ENCODE measurements at regions of chr6 and their contacts with region 1.

Region 1: DNA sequence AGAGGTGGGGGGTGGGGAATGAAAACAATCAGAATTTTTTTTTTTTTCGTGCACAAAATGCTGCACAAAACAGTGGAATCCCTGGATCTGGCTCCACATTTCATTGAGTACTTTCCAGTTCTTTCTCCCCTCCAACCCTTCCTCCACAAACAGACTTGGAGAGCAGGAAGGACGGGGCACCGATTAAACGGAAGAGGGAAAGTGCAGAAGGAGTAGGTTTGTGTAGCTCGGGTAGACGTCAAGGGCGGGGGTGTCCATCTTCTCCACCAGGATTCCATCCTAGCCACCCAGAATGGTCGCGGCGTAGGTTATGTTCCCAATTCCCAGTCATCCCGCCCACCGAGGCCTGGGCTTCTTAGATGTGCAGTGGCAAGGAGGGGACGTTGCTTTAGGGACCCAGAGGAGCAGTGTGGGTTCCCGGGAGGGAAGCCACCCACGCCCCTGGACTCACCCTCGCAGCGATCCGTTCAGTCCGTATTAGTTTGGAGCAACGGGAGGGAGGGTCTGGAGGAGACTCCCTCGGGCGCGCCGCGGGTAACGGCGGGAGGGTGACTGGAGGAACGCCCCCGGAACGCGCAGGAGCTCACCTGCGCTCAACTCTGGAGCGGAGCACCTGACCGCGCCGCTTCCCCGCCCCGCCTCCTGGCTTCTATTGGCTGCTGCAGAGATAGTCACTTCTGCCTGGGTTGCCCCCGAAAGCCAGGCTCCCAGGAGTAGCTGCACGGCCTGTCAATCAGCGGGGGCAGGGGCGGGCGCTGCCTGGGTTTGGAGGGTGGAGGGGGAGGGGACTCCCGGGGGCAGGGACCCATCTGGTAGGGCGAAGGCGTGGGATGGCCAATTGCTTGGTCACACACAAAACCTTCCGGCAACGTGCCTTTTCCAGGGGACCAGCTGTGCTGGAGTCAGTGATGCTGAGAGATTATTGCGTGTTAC is at the start of gene ENPP5:
- DNase-seq: peak; percentile 96
- H3K4me3 Mint-ChIP-seq: peak within 1 kb of the TSS; percentile 95
- H3K27ac Mint-ChIP-seq: peak within 1 kb of the TSS; percentile 87
- H3K4me1 Mint-ChIP-seq: no peaks in the 10 kb centered on the region
- H3K27me3 Mint-ChIP-seq: no peaks in the 10 kb centered on the region
- CTCF ChIP-seq: no peak
- total RNA-seq, gene ENPP5: 17.3 and 18.7 TPM in 2 replicates

Region 2: GRCh38 chr6:45922728-45923351 is 247.8 kb before region 1 on chr6:
- CTCF ChIA-PET with region 1: no interaction called
- intact Hi-C with region 1: no loop called
- DNase-seq: peak; percentile 52
- H3K4me3 Mint-ChIP-seq: no peak overlapping the region
- H3K27ac Mint-ChIP-seq: no peak overlapping the region
- H3K4me1 Mint-ChIP-seq: peaks cover 8% of the 10 kb centered on the region
- H3K27me3 Mint-ChIP-seq: no peaks in the 10 kb centered on the region
- CTCF ChIP-seq: peak; percentile 63

Region 3: GRCh38 chr6:46080111-46080510 is 90.5 kb before region 1 on chr6:
- CTCF ChIA-PET with region 1: no interaction called
- intact Hi-C with region 1: no loop called
- DNase-seq: no peak
- H3K4me3 Mint-ChIP-seq: no peak overlapping the region
- H3K27ac Mint-ChIP-seq: no peak overlapping the region
- H3K4me1 Mint-ChIP-seq: no peaks in the 10 kb centered on the region
- H3K27me3 Mint-ChIP-seq: peaks cover 13% of the 10 kb centered on the region
- CTCF ChIP-seq: no peak

Region 4: DNA sequence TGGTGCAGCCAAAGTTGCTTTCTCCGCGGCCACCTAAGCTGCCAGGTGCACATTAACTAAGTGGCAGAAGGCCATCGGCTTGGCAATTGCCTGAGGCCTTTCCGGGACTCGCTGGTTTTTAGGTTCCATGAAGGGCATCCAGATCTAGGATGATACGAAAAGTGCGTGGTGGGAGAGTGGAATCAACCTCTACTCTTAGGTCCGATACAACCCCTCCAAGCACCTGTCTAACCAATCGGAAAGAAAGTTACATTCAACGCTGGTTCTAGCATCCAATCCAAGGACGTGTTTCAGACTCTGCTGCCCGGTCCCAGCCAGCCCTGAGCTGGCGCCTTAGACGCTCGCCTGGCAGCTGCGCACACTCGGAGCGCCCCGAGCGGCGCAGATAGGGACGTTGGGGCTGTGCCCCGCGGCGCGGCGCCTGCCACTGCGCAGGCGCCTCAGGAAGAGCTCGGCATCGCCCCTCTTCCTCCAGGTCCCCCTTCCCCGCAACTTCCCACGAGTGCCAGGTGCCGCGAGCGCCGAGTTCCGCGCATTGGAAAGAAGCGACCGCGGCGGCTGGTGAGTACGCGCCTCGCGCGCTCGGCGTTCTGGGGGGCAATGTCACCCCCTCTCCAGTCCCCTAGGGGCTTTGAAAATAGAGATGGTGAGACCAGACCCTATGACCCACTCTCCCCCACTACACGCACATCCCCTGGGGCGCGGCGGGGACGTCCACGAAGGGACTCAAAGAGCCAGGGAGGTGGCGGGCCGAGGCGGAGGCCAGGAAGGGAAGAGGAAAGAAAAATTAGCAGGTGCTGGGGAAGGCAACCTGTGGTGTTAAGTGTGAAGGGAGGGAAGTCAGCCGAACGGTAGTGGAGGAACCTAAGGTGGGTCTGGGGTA is 40.8 kb before region 1 on chr6 and contains the start of gene ENPP4:
- CTCF ChIA-PET with region 1: interaction called, 3 read pairs
- intact Hi-C with region 1: loop called (anchors 1 kb)
- DNase-seq: peak; percentile 91
- H3K4me3 Mint-ChIP-seq: peak within 1 kb of the TSS; percentile 88
- H3K27ac Mint-ChIP-seq: peak within 1 kb of the TSS; percentile 58
- H3K4me1 Mint-ChIP-seq: peaks cover 9% of the 10 kb centered on the region
- H3K27me3 Mint-ChIP-seq: no peaks in the 10 kb centered on the region
- CTCF ChIP-seq: no peak
- total RNA-seq, gene ENPP4: 16.7 and 17.2 TPM in 2 replicates

Region 5: GRCh38 chr6:46876126-46876525 is 705.5 kb after region 1 on chr6:
- CTCF ChIA-PET with region 1: no interaction called
- intact Hi-C with region 1: no loop called
- DNase-seq: peak; percentile 83
- H3K4me3 Mint-ChIP-seq: no peak overlapping the region
- H3K27ac Mint-ChIP-seq: peak overlapping the region; percentile 40
- H3K4me1 Mint-ChIP-seq: peaks cover 33% of the 10 kb centered on the region
- H3K27me3 Mint-ChIP-seq: no peaks in the 10 kb centered on the region
- CTCF ChIP-seq: no peak